ENCODE measurements at regions of chr7 and their contacts with region 1.

Region 1: DNA sequence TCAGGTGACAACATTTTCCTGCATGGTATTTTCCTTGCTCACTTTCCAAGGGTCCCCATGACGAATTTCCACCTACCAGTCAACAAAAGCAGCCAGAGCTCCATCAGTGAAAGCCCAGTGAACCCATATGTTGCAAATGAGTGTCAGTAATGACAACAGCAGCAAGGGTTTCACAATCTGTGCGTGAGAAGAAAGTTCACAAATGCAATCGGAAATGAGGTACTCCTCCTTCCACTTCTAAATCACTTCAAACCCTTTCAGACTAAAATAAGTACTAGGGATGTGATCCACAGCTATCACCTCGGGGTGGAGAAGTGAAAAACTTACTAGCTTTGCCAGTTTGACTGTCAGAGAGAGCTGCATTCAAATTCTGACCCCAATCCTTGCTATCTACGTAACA is 55.6 kb upstream of the BET1 start:
- DNase-seq: no peak
- H3K4me3 ChIP-seq: no peak overlapping the region
- H3K27ac ChIP-seq: no peak overlapping the region
- H3K4me1 ChIP-seq: peaks cover 10% of the 10 kb centered on the region
- H3K27me3 ChIP-seq: peaks cover 66 to 90% of the 10 kb centered on the region in 2 experiments
- CTCF ChIP-seq: no peak
- POLR2A ChIP-seq: no peak

Region 2: DNA sequence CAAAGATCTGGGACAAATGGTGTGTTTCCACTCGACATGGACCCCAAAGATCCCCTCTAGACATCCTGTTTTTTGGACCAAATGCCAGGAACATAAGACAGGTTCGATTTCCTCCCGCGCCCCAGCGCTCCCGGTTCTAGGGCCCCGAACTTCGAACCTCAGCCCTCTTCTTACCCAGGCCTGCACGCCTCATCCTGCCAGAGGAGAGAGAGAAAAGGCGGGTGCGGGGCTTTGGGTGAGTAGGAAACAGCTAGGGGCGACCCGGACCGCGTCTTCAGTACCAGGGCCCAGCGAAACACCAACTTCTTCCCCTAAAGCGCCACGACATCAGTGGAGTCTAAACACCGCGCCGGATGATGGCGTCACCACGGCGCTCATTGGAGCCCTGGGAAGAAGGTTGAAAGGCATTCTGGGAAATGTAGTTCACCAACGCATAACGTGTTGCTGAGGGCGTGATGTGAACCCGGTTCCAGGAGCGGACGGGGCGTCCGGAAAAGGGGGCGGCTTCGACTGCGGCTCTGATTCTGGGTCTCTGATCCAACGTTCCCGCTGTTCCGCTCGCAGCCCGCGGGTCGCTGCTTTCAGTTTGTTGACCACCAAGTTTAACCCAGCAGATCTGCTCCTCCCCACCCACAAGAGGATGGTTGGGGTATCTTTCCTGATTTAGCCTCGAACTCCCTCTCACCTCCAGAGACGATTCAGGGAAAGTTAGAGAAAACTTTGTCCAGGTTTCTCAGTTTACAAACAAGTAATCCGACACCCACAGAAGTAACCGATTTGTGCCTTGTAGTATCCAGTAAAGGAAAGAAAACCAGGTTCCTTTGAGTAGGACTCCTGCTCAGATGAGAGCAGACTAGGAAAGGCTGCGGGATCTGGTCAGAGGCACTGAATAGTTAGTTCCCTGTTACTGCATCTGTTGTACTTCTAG is 55.5 kb before region 1 on chr7 and contains the start of gene BET1:
- CTCF ChIA-PET with region 1: no interaction called
- POLR2A ChIA-PET with region 1: no interaction called
- dilution Hi-C with region 1: no loop called
- intact Hi-C with region 1: loop called (anchors 5 kb)
- DNase-seq: peak; percentile 96
- H3K4me3 ChIP-seq: peak within 1 kb of the TSS; percentile 85 to 95 (median 87)
- H3K27ac ChIP-seq: peak within 1 kb of the TSS; percentile 76
- H3K4me1 ChIP-seq: peaks cover 16% of the 10 kb centered on the region
- H3K27me3 ChIP-seq: peaks cover 10 to 23% of the 10 kb centered on the region in 2 experiments
- CTCF ChIP-seq: no peak
- POLR2A ChIP-seq: peak; percentile 66
- total RNA-seq, gene BET1: 23.9 and 28.4 TPM in 2 replicates

Region 3: GRCh38 chr7:94012746-94013145 is 47.0 kb before region 1 on chr7:
- CTCF ChIA-PET with region 1: interaction called, 4 read pairs
- POLR2A ChIA-PET with region 1: no interaction called
- dilution Hi-C with region 1: no loop called
- intact Hi-C with region 1: loop called (anchors 5 kb)
- DNase-seq: no peak
- H3K4me3 ChIP-seq: no peak overlapping the region
- H3K27ac ChIP-seq: no peak overlapping the region
- H3K4me1 ChIP-seq: no peaks in the 10 kb centered on the region
- H3K27me3 ChIP-seq: peaks cover 3 to 9% of the 10 kb centered on the region in 2 experiments
- CTCF ChIP-seq: no peak
- POLR2A ChIP-seq: no peak

Region 4: DNA sequence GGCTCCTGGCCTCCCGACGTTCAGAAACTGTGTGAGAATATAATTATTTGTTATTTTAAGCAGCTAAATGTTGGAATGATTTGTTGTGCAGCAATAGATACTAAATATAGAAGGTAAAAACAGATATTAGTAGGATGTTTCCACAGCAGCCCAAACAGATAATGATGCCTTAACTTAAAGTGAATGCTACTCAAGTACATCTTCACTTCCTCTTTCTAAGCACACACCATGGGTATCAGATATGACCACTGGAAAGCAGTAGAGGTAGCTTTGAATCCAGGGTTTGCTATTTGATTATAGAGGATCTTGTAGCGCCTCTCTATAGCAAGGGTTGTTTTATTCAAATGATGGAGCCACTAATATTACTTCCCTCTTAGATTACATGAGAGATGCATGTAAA is 17.4 kb before region 1 on chr7:
- CTCF ChIA-PET with region 1: interaction called, 11 read pairs
- POLR2A ChIA-PET with region 1: no interaction called
- dilution Hi-C with region 1: no loop called
- intact Hi-C with region 1: loop called (anchors 1 kb)
- DNase-seq: no peak
- H3K4me3 ChIP-seq: no peak overlapping the region
- H3K27ac ChIP-seq: no peak overlapping the region
- H3K4me1 ChIP-seq: peaks cover 22% of the 10 kb centered on the region
- H3K27me3 ChIP-seq: peaks cover 24 to 40% of the 10 kb centered on the region in 2 experiments
- CTCF ChIP-seq: no peak
- POLR2A ChIP-seq: no peak

Region 5: GRCh38 chr7:94111009-94111408 is 51.3 kb after region 1 on chr7:
- CTCF ChIA-PET with region 1: no interaction called
- POLR2A ChIA-PET with region 1: no interaction called
- dilution Hi-C with region 1: no loop called
- intact Hi-C with region 1: no loop called
- DNase-seq: no peak
- H3K4me3 ChIP-seq: no peak overlapping the region
- H3K27ac ChIP-seq: no peak overlapping the region
- H3K4me1 ChIP-seq: no peaks in the 10 kb centered on the region
- H3K27me3 ChIP-seq: no peaks in the 10 kb centered on the region
- CTCF ChIP-seq: no peak
- POLR2A ChIP-seq: no peak

Region 6: GRCh38 chr7:94174956-94175355 is 115.2 kb after region 1 on chr7:
- CTCF ChIA-PET with region 1: no interaction called
- POLR2A ChIA-PET with region 1: no interaction called
- dilution Hi-C with region 1: no loop called
- intact Hi-C with region 1: no loop called
- DNase-seq: peak; percentile 59
- H3K4me3 ChIP-seq: no peak overlapping the region
- H3K27ac ChIP-seq: peak overlapping the region; percentile 15
- H3K4me1 ChIP-seq: peaks cover 55% of the 10 kb centered on the region
- H3K27me3 ChIP-seq: no peaks in the 10 kb centered on the region
- CTCF ChIP-seq: no peak
- POLR2A ChIP-seq: no peak

Measured in endothelial cell of umbilical vein (primary cell).